CD8-positive, alpha-beta T cell (primary cell): ENCODE measurements at regions of chr16 and their contacts with region 1.

Region 1: GRCh38 chr16:89490387-89491237 is at the start of gene ANKRD11:
- DNase-seq: peak; percentile 96 to 100 (median 98)
- ATAC-seq: peak; percentile 86
- H3K4me3 ChIP-seq: peak within 1 kb of the TSS; percentile 66 to 91
- H3K4me3 Mint-ChIP-seq: peak within 1 kb of the TSS; percentile 95
- H3K27ac ChIP-seq: peak within 1 kb of the TSS; percentile 91 to 93
- H3K27ac Mint-ChIP-seq: peak within 1 kb of the TSS; percentile 96
- H3K4me1 ChIP-seq: peaks cover 46% of the 10 kb centered on the region
- H3K4me1 Mint-ChIP-seq: peaks cover 66% of the 10 kb centered on the region
- H3K27me3 ChIP-seq: no peaks in the 10 kb centered on the region
- H3K27me3 Mint-ChIP-seq: no peaks in the 10 kb centered on the region
- CTCF ChIP-seq: no peak
- total RNA-seq, gene ANKRD11: 257 to 260 TPM

Region 2: DNA sequence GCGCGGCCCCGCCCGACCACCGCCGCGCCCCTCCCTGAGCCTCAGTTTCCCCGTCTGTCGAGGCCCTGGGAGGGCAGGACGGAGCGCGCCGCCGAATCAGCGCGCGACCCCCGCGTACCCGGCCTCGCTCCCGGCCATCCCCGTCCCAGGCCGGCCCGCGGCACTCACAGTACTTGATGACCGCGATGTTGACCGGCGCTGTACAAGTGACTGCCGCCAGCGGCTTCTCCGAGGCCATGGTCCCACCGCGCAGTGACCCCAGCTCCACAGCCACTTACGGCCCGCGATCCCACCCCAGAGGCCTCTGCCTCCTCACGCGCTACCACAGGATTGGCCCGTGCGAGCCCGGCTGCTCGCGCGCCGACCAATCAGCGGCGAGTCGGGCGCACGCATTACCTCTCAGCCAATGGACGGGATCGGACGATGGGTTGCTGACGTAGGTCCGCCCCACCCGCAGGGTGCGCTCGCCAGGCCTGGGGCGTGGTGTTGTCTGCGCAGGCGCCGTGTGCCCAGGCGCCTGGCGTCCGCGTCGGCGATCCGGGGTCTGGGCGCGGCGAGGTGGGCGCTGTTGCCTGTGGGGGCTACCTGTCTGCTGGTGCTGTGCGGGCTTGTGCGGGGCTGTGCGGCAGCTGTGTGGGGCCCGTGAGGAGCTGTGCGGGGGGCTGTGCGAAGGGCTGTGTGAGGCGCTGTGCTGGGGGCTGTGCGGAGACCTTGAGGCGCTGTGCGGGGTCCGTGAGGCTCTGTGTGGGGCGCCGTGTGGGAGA is 827.6 kb before region 1 on chr16 and contains the start of gene MVD:
- CTCF ChIA-PET with region 1: no interaction called
- POLR2A ChIA-PET with region 1: no interaction called
- intact Hi-C with region 1: loop called in 1 of 2 experiments (anchors 2 kb)
- DNase-seq: peak; percentile 88 to 99 (median 95)
- ATAC-seq: peak; percentile 96
- H3K4me3 ChIP-seq: peak within 1 kb of the TSS; percentile 81 to 85
- H3K4me3 Mint-ChIP-seq: peak within 1 kb of the TSS; percentile 94
- H3K27ac ChIP-seq: peak within 1 kb of the TSS; percentile 84 to 87
- H3K27ac Mint-ChIP-seq: peak within 1 kb of the TSS; percentile 95
- H3K4me1 ChIP-seq: peaks cover 15% of the 10 kb centered on the region
- H3K4me1 Mint-ChIP-seq: peaks cover 20% of the 10 kb centered on the region
- H3K27me3 ChIP-seq: no peaks in the 10 kb centered on the region
- H3K27me3 Mint-ChIP-seq: no peaks in the 10 kb centered on the region
- CTCF ChIP-seq: no peak
- total RNA-seq, gene MVD: 118 to 124 TPM

Region 3: DNA sequence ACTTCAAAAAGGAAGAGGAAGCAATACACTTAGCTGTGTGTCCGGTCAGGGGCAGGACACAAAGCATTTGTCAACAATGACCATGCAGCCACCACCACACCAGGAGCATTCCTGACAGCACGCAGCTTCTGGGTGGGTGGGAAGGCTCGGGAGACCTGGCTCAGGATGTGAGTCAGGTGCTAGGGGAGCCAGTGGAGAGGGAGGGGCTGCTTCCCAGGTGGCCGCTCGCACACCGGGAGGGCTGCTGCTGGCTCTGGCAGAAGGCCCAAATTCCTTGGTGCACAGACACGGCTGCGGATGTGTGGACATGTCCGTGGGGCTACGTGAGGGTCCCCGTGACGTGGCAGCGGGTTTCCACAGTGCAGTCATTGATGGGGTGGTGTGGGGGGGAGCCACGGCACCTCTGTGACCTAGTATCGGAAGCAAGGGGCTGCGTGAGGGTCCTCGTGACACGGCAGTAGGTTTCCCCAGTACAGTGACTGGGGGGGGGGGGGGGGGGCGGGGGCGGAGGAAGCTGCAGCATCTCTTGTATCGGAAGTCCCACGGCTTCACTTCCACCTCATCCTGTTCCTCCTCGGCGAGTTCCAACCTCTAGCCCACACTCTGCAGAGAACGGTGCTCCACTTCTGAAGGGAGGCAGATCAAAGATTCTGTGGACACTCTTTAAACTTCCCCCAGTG is 160.3 kb before region 1 on chr16:
- CTCF ChIA-PET with region 1: interaction called, 3 read pairs
- POLR2A ChIA-PET with region 1: interaction called, 3 read pairs
- intact Hi-C with region 1: loop called in 1 of 2 experiments (anchors 2 kb)
- DNase-seq: peak in 6 of 9 experiments; percentile 23 to 85 (median 51)
- ATAC-seq: peak; percentile 55
- H3K4me3 ChIP-seq: peak overlapping the region; percentile 16 to 43
- H3K4me3 Mint-ChIP-seq: peak overlapping the region; percentile 60
- H3K27ac ChIP-seq: peak overlapping the region; percentile 45 to 81
- H3K27ac Mint-ChIP-seq: peak overlapping the region; percentile 73
- H3K4me1 ChIP-seq: peaks cover 77% of the 10 kb centered on the region
- H3K4me1 Mint-ChIP-seq: peaks cover 83% of the 10 kb centered on the region
- H3K27me3 ChIP-seq: no peaks in the 10 kb centered on the region
- H3K27me3 Mint-ChIP-seq: no peaks in the 10 kb centered on the region
- CTCF ChIP-seq: no peak

Region 4: GRCh38 chr16:89409161-89409711 is 81.4 kb before region 1 on chr16:
- CTCF ChIA-PET with region 1: interaction called, 4 read pairs
- POLR2A ChIA-PET with region 1: no interaction called
- intact Hi-C with region 1: loop called (anchors 1 to 2 kb)
- DNase-seq: peak; percentile 56 to 94 (median 79)
- ATAC-seq: peak; percentile 84
- H3K4me3 ChIP-seq: no peak overlapping the region
- H3K4me3 Mint-ChIP-seq: peak overlapping the region; percentile 59
- H3K27ac ChIP-seq: peak overlapping the region; percentile 71 to 77
- H3K27ac Mint-ChIP-seq: peak overlapping the region; percentile 90
- H3K4me1 ChIP-seq: peaks cover 99% of the 10 kb centered on the region
- H3K4me1 Mint-ChIP-seq: peaks cover 88% of the 10 kb centered on the region
- H3K27me3 ChIP-seq: peaks cover 0 to 2% of the 10 kb centered on the region in 2 experiments
- H3K27me3 Mint-ChIP-seq: no peaks in the 10 kb centered on the region
- CTCF ChIP-seq: no peak

Region 5: DNA sequence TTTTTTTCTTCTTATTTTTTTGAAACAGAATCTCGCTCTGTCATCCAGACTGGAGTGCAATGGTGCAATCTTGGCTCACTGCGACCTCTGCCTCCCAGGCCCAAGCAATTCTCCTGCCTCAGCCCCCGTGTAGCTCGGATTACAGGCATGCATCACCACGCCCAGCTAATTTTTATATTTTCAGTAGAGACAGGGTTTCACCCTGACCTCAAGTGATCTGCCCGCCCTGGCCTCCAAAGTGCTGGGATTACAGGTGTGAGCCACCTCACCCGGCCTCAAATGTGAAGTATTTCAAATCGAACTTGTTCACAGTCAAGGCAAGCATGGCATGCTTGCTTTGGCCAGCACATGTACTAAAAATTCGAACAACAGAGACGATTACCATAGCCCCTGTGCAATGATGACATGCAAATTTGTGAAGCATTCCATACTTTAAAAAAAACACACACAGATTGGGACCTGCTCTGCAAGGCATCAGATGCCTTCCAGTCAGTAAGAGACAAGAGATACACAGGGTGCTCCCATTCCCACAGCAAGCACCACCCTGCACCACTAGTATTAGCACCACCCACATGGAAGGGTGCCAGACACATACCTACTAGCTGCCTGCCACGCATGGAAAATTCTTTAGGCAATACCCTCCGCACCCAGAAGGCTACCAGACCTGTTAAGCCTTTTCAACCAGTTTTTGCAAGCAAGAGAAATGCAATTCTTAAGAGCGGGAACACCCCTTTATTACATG is 47.5 kb before region 1 on chr16:
- CTCF ChIA-PET with region 1: interaction called, 3 read pairs
- POLR2A ChIA-PET with region 1: interaction called, 5 read pairs
- intact Hi-C with region 1: loop called (anchors 2 to 5 kb)
- DNase-seq: peak in 1 of 9 experiments; percentile 29
- ATAC-seq: no peak
- H3K4me3 ChIP-seq: no peak overlapping the region
- H3K4me3 Mint-ChIP-seq: peak overlapping the region; percentile 71
- H3K27ac ChIP-seq: peak overlapping the region in 1 of 2 experiments; percentile 23
- H3K27ac Mint-ChIP-seq: peak overlapping the region; percentile 15
- H3K4me1 ChIP-seq: peaks cover 92% of the 10 kb centered on the region
- H3K4me1 Mint-ChIP-seq: peaks cover 93% of the 10 kb centered on the region
- H3K27me3 ChIP-seq: no peaks in the 10 kb centered on the region
- H3K27me3 Mint-ChIP-seq: no peaks in the 10 kb centered on the region
- CTCF ChIP-seq: no peak

Region 6: GRCh38 chr16:89507834-89508590 is 17.4 kb after region 1 on chr16 and contains the start of gene SPG7:
- CTCF ChIA-PET with region 1: interaction called, 6 read pairs
- POLR2A ChIA-PET with region 1: interaction called, 17 read pairs
- intact Hi-C with region 1: loop called (anchors 1 kb)
- DNase-seq: peak; percentile 85 to 96 (median 88)
- ATAC-seq: peak; percentile 73
- H3K4me3 ChIP-seq: peak within 1 kb of the TSS; percentile 61 to 91
- H3K4me3 Mint-ChIP-seq: peak within 1 kb of the TSS; percentile 96
- H3K27ac ChIP-seq: peak within 1 kb of the TSS; percentile 77 to 86
- H3K27ac Mint-ChIP-seq: peak within 1 kb of the TSS; percentile 96
- H3K4me1 ChIP-seq: peaks cover 37% of the 10 kb centered on the region
- H3K4me1 Mint-ChIP-seq: peaks cover 32% of the 10 kb centered on the region
- H3K27me3 ChIP-seq: no peaks in the 10 kb centered on the region
- H3K27me3 Mint-ChIP-seq: no peaks in the 10 kb centered on the region
- CTCF ChIP-seq: no peak
- total RNA-seq, gene SPG7: 159 to 180 TPM

Region 7: GRCh38 chr16:89550421-89551002 is 59.9 kb after region 1 on chr16:
- CTCF ChIA-PET with region 1: no interaction called
- POLR2A ChIA-PET with region 1: no interaction called
- intact Hi-C with region 1: no loop called
- DNase-seq: no peak
- ATAC-seq: no peak
- H3K4me3 ChIP-seq: no peak overlapping the region
- H3K4me3 Mint-ChIP-seq: no peak overlapping the region
- H3K27ac ChIP-seq: no peak overlapping the region
- H3K27ac Mint-ChIP-seq: no peak overlapping the region
- H3K4me1 ChIP-seq: peaks cover 23% of the 10 kb centered on the region
- H3K4me1 Mint-ChIP-seq: peaks cover 23% of the 10 kb centered on the region
- H3K27me3 ChIP-seq: no peaks in the 10 kb centered on the region
- H3K27me3 Mint-ChIP-seq: no peaks in the 10 kb centered on the region
- CTCF ChIP-seq: no peak